ENCODE measurements at regions of chr2 and their contacts with region 1.

Region 1: DNA sequence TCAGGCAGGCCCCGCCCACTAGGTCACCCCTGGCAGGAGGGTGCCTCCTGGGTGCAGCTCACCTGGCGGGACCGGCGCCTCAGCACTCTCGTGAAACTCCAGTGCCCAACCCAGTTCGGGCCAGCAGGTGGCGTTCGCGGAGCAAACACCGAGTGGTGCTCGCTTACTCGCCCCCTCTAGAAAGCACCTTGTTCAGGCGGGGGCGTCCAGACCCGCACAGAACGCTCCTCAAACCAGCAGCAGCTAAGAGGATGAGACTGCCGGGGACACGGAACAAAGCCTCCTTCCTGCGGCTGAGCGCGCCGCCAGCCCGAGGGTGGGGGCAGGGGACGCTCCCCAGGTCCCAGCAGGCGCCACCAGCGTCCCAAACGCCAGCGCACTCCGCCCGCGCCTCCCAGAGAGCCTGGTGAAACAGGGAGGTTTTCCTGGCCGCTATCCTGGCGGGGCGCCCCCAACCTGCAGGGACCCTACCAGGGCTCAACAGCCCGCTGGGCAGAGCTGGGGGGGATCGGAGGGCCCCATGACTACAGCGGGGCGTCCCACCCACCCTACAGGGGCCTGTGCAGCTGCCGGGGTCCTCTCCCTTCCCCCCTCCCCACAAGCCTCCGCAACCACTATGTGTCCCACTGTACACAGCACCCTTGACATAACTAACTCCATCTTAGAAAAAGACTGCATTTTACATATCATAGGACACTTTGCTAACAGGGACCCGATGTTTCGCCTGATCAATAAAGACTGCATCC is 44.7 kb downstream of the MRPS5 start:
- DNase-seq: peak; percentile 86
- CTCF ChIP-seq: peak; percentile 93

Region 2: DNA sequence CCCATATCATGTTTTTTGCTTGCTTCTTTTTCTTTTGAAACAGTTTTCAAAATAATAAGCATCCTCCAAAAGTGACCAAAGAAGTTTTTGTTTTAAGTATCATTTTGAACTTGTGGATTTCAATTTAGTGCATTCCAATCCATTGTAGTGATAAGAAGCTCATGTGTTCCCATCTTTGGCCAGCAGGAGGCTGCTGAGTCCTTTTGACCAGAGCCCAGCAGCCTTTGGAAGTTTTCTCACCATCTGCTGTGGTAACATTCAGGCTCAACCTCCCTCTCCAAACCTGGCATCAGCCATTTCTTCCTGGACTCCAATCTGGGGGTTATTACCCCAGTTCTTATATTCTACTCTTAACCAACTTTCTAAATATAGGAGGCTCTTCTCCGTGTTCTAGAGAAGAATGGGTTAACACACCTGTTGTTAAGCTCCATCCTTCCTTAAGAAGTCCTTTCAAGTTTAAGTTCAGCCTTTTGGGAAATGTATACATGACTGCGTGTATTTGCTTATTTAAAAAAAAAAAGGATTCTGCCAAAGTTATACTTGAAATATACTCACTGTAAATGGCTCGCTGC is 90.5 kb before region 1 on chr2:
- CTCF ChIA-PET with region 1: interaction called, 17 read pairs
- POLR2A ChIA-PET with region 1: no interaction called
- DNase-seq: peak; percentile 67
- CTCF ChIP-seq: peak; percentile 54

Region 3: GRCh38 chr2:95043300-95044093 is 33.5 kb before region 1 on chr2:
- CTCF ChIA-PET with region 1: interaction called, 17 read pairs
- POLR2A ChIA-PET with region 1: no interaction called
- DNase-seq: no peak
- CTCF ChIP-seq: no peak

Region 4: DNA sequence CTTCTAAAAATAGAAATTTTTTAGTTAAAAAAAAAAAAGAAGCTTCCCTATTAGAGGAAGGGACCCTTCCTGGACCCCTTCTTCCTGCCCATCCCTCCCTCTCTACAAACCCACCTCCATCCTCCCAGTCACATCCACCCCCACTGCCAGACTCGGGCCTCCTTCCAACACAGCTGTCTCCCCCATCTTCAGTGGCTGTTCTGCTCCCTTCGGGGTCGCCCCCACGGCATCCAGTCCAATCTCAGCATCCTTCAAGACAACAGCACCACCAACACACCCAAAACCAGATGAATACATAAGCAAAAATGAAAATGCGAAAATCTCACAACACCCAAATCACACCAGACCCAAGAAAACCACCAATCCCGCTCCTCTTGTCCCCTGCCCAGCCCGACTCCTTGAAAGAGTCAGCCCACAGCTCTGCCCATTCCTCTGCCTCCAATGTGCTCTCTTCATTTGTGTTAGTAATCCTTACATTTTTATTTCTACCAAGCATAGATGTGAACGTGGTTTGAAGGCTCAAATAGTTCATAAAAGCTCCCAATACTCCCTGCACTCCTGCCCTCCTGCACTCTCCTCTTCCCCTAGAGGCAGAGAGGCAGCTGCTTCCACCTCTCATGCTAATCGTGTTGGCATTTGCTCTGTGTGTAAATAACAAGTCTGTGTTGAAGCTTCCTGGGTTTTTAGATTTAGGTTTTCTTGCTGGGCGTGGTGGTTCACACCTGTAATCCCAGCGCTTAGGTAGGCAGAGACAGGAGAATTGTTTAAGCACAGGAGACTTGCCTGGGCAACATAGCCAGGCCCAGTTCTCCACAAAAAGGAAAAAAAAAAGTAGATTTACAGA is 14.5 kb before region 1 on chr2:
- CTCF ChIA-PET with region 1: interaction called, 88 read pairs
- POLR2A ChIA-PET with region 1: interaction called, 3 read pairs
- DNase-seq: no peak
- CTCF ChIP-seq: no peak

Region 5: DNA sequence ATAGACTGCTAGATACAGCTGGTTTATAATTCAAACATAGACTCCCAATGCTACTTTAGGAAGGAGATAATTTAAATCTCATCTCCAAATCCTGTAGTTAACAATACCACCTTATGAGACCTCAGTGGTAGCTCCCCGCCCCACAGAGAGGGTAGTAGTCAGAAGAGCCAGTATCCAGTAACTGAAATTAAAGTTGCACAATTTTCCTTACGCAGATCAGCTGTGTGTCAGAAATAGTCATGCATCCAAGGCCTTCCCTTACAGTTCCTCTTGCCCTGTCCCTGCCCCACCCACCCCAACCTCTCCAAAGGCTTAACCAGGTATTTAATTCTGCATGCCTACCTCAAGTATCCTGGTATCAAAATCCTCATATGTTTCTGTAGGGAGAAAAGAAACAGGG is 29.1 kb after region 1 on chr2:
- CTCF ChIA-PET with region 1: interaction called, 11 read pairs
- POLR2A ChIA-PET with region 1: no interaction called
- DNase-seq: no peak
- CTCF ChIP-seq: no peak

Region 6: GRCh38 chr2:95121407-95122196 is 44.6 kb after region 1 on chr2 and contains the start of gene MRPS5:
- CTCF ChIA-PET with region 1: interaction called, 55 read pairs
- POLR2A ChIA-PET with region 1: no interaction called
- DNase-seq: peak; percentile 95
- CTCF ChIP-seq: no peak

Region 7: GRCh38 chr2:95530734-95531133 is 453.8 kb after region 1 on chr2:
- CTCF ChIA-PET with region 1: no interaction called
- POLR2A ChIA-PET with region 1: no interaction called
- DNase-seq: peak; percentile 60
- CTCF ChIP-seq: no peak

Region 8: GRCh38 chr2:96665083-96665569 is 1588.2 kb after region 1 on chr2:
- CTCF ChIA-PET with region 1: no interaction called
- POLR2A ChIA-PET with region 1: no interaction called
- DNase-seq: no peak
- CTCF ChIP-seq: no peak

Measured in GM10248 (cell line).